ENCODE measurements at regions of chr12 and their contacts with region 1.

Region 1: DNA sequence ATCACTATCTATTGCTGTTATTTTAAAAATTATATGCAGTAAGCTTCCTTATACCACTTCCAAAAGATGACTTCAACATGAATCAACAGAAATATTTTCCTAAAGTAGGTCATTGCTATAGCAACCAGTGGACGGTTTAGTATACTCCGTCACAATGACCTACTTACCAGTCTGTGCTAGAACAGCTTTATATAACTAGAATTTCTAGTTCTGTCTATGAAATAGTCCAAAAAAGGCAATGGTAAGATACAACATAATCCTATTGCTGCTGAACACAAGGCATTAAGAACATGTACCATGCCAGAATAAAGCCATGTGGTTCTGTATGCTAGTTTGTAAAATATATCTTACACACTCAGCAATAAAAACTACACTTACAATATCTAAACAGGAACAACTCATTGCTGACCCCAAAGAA is 40.7 kb upstream of the MTERF2 start:
- DNase-seq: no peak
- H3K4me3 Mint-ChIP-seq: peak overlapping the region; percentile 3
- H3K27ac Mint-ChIP-seq: peak overlapping the region; percentile 89
- H3K4me1 Mint-ChIP-seq: peaks cover 67% of the 10 kb centered on the region
- H3K27me3 Mint-ChIP-seq: no peaks in the 10 kb centered on the region

Region 2: GRCh38 chr12:106986625-106987430 is 40.8 kb before region 1 on chr12 and contains the start of gene MTERF2:
- CTCF ChIA-PET with region 1: no interaction called
- POLR2A ChIA-PET with region 1: interaction called, 4 read pairs
- intact Hi-C with region 1: loop called (anchors 5 kb)
- DNase-seq: peak; percentile 90
- H3K4me3 Mint-ChIP-seq: peak within 1 kb of the TSS; percentile 88
- H3K27ac Mint-ChIP-seq: peak within 1 kb of the TSS; percentile 70
- H3K4me1 Mint-ChIP-seq: peaks cover 39% of the 10 kb centered on the region
- H3K27me3 Mint-ChIP-seq: no peaks in the 10 kb centered on the region
- total RNA-seq, gene MTERF2: 5.6 to 5.7 TPM

Region 3: GRCh38 chr12:107864235-107864634 is 836.6 kb after region 1 on chr12:
- CTCF ChIA-PET with region 1: no interaction called
- POLR2A ChIA-PET with region 1: no interaction called
- intact Hi-C with region 1: no loop called
- DNase-seq: no peak
- H3K4me3 Mint-ChIP-seq: no peak overlapping the region
- H3K27ac Mint-ChIP-seq: no peak overlapping the region
- H3K4me1 Mint-ChIP-seq: peaks cover 5% of the 10 kb centered on the region
- H3K27me3 Mint-ChIP-seq: peaks cover 55% of the 10 kb centered on the region

Measured in activated CD4-positive, alpha-beta memory T cell treated with anti-CD3 and anti-CD28 coated beads for 36 hours (primary cell).